ENCODE measurements at regions of chr7 and their contacts with region 1.

Region 1: GRCh38 chr7:1503816-1504775 is at the start of gene INTS1:
- DNase-seq: peak; percentile 88 to 90 (median 89)
- H3K4me3 ChIP-seq: peak within 1 kb of the TSS; percentile 57 to 89
- H3K4me3 Mint-ChIP-seq: peak within 1 kb of the TSS; percentile 83 to 92 (median 86)
- H3K27ac ChIP-seq: peak within 1 kb of the TSS; percentile 59
- H3K27ac Mint-ChIP-seq: peak within 1 kb of the TSS; percentile 68 to 87 (median 81)
- H3K4me1 ChIP-seq: peaks cover 34% of the 10 kb centered on the region
- H3K4me1 Mint-ChIP-seq: peaks cover 21 to 40% (median 33%) of the 10 kb centered on the region in 4 donors
- H3K27me3 ChIP-seq: no peaks in the 10 kb centered on the region
- H3K27me3 Mint-ChIP-seq: no peaks in the 10 kb centered on the region
- total RNA-seq, gene INTS1: 135 to 137 TPM

Region 2: DNA sequence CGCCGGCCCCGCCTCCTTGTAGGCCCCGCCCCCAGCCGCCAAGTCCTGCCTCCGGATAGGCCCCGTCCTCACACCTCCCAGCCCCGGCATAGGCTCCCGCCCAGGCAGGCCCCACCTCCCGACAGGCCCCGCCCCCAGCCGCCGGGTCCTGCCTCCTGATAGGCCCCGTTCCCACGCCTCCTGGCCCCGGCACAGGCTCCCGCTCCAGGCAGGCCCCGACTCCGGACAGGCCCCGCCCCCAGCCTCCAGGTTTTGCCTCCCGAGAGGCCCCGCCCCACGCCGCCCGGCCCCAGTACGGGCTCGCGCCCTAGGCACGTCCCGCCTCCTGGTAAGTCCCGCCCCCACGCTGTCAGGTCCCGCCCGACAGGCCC is 44.6 kb before region 1 on chr7:
- CTCF ChIA-PET with region 1: no interaction called
- POLR2A ChIA-PET with region 1: no interaction called
- intact Hi-C with region 1: loop called (anchors 1 kb)
- DNase-seq: peak; percentile 98 to 99 (median 98)
- H3K4me3 ChIP-seq: peak overlapping the region in 1 of 2 donors; percentile 75
- H3K4me3 Mint-ChIP-seq: peak overlapping the region in 7 of 8 donors; percentile 62 to 81 (median 76)
- H3K27ac ChIP-seq: peak overlapping the region; percentile 34
- H3K27ac Mint-ChIP-seq: peak overlapping the region in 2 of 7 donors; percentile 35 to 63
- H3K4me1 ChIP-seq: peaks cover 28% of the 10 kb centered on the region
- H3K4me1 Mint-ChIP-seq: peaks cover 9 to 38% (median 16%) of the 10 kb centered on the region in 4 donors
- H3K27me3 ChIP-seq: no peaks in the 10 kb centered on the region
- H3K27me3 Mint-ChIP-seq: no peaks in the 10 kb centered on the region

Region 3: GRCh38 chr7:1548438-1548831 is 44.3 kb after region 1 on chr7:
- CTCF ChIA-PET with region 1: no interaction called
- POLR2A ChIA-PET with region 1: no interaction called
- intact Hi-C with region 1: no loop called
- DNase-seq: peak in 1 of 5 donors; percentile 43
- H3K4me3 ChIP-seq: no peak overlapping the region
- H3K4me3 Mint-ChIP-seq: peak overlapping the region in 1 of 8 donors; percentile 33
- H3K27ac ChIP-seq: no peak overlapping the region
- H3K27ac Mint-ChIP-seq: peak overlapping the region in 1 of 7 donors; percentile 44
- H3K4me1 ChIP-seq: no peaks in the 10 kb centered on the region
- H3K4me1 Mint-ChIP-seq: peaks cover 3 to 8% (median 4%) of the 10 kb centered on the region in 4 donors
- H3K27me3 ChIP-seq: no peaks in the 10 kb centered on the region
- H3K27me3 Mint-ChIP-seq: no peaks in the 10 kb centered on the region

Region 4: GRCh38 chr7:1569833-1570633 is 65.9 kb after region 1 on chr7 and contains the start of gene PSMG3:
- CTCF ChIA-PET with region 1: no interaction called
- POLR2A ChIA-PET with region 1: interaction called, 3 read pairs
- intact Hi-C with region 1: loop called (anchors 1 kb)
- DNase-seq: peak; percentile 83 to 87 (median 85)
- H3K4me3 ChIP-seq: peak within 1 kb of the TSS; percentile 60 to 76
- H3K4me3 Mint-ChIP-seq: peak within 1 kb of the TSS; percentile 86 to 91 (median 88)
- H3K27ac ChIP-seq: peak within 1 kb of the TSS; percentile 77
- H3K27ac Mint-ChIP-seq: peak within 1 kb of the TSS; percentile 87 to 97 (median 94)
- H3K4me1 ChIP-seq: peaks cover 20% of the 10 kb centered on the region
- H3K4me1 Mint-ChIP-seq: peaks cover 11 to 40% (median 21%) of the 10 kb centered on the region in 4 donors
- H3K27me3 ChIP-seq: no peaks in the 10 kb centered on the region
- H3K27me3 Mint-ChIP-seq: no peaks in the 10 kb centered on the region
- total RNA-seq, gene PSMG3: 19.3 to 22.2 TPM

Measured in CD4-positive, alpha-beta memory T cell (primary cell).